ENCODE measurements at regions of chr3 and their contacts with region 1.

Region 1: GRCh38 chr3:98140531-98140930 is 6.7 kb upstream of the OR5H14 start:
- DNase-seq: no peak
- H3K4me3 ChIP-seq: no peak overlapping the region
- H3K4me3 Mint-ChIP-seq: no peak overlapping the region
- H3K27ac ChIP-seq: no peak overlapping the region
- H3K27ac Mint-ChIP-seq: no peak overlapping the region
- H3K4me1 ChIP-seq: no peaks in the 10 kb centered on the region
- H3K4me1 Mint-ChIP-seq: no peaks in the 10 kb centered on the region
- H3K27me3 ChIP-seq: no peaks in the 10 kb centered on the region
- H3K27me3 Mint-ChIP-seq: peaks cover 4 to 8% of the 10 kb centered on the region in 2 donors

Region 2: DNA sequence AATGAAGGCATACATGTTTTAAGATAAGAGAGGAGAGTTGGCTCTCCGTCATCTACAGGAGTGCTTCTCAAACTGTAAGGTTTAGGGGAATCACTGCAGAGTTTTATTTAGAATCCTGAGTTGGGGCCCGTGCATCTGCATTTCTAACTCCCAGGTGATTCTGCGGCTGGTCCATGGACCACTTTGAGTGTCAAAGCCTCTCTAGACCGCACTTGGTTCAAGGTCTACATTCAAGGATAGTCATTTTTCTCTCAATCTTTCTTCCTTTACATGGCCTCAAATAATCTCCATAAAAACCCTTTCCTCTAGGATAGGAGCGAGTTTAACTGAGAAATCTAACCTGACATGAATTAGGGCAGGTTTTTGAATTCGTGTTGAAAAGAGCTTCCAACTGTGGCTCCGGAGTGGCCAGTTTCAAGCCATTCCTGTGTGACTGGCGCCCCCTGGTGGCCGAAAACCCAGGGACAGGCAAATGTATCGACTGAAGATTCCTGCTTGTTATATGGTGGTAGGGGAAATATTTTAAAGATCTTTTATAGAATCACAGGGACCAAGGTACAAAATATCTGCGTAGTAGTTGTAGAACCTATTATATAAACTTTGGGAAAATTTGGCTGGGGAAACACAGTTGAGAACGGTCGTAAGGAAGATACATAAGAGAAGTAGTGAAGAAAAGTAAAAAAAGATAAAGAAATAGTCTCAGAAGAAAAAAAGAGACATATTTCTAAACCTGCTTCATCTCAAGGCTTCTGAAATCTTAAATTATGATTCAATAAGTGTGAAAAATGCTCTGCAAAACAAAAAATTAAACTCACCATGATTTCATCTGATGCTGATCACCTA is 117.3 kb before region 1 on chr3:
- CTCF ChIA-PET with region 1: no interaction called
- POLR2A ChIA-PET with region 1: no interaction called
- intact Hi-C with region 1: no loop called
- DNase-seq: peak; percentile 77 to 84 (median 81)
- H3K4me3 ChIP-seq: no peak overlapping the region
- H3K4me3 Mint-ChIP-seq: no peak overlapping the region
- H3K27ac ChIP-seq: no peak overlapping the region
- H3K27ac Mint-ChIP-seq: peak overlapping the region in 6 of 7 donors; percentile 6 to 72 (median 36)
- H3K4me1 ChIP-seq: peaks cover 1% of the 10 kb centered on the region
- H3K4me1 Mint-ChIP-seq: peaks cover under 1 to 5% (median 5%) of the 10 kb centered on the region in 4 donors
- H3K27me3 ChIP-seq: no peaks in the 10 kb centered on the region
- H3K27me3 Mint-ChIP-seq: no peaks in the 10 kb centered on the region

Region 3: GRCh38 chr3:98115717-98116116 is 24.8 kb before region 1 on chr3:
- CTCF ChIA-PET with region 1: no interaction called
- POLR2A ChIA-PET with region 1: no interaction called
- intact Hi-C with region 1: no loop called
- DNase-seq: no peak
- H3K4me3 ChIP-seq: no peak overlapping the region
- H3K4me3 Mint-ChIP-seq: no peak overlapping the region
- H3K27ac ChIP-seq: no peak overlapping the region
- H3K27ac Mint-ChIP-seq: no peak overlapping the region
- H3K4me1 ChIP-seq: no peaks in the 10 kb centered on the region
- H3K4me1 Mint-ChIP-seq: no peaks in the 10 kb centered on the region
- H3K27me3 ChIP-seq: no peaks in the 10 kb centered on the region
- H3K27me3 Mint-ChIP-seq: peaks cover 8 to 10% of the 10 kb centered on the region in 2 donors

Region 4: GRCh38 chr3:98182196-98182595 is 41.7 kb after region 1 on chr3:
- CTCF ChIA-PET with region 1: no interaction called
- POLR2A ChIA-PET with region 1: no interaction called
- intact Hi-C with region 1: loop called (anchors 2 kb)
- DNase-seq: no peak
- H3K4me3 ChIP-seq: no peak overlapping the region
- H3K4me3 Mint-ChIP-seq: no peak overlapping the region
- H3K27ac ChIP-seq: no peak overlapping the region
- H3K27ac Mint-ChIP-seq: no peak overlapping the region
- H3K4me1 ChIP-seq: no peaks in the 10 kb centered on the region
- H3K4me1 Mint-ChIP-seq: no peaks in the 10 kb centered on the region
- H3K27me3 ChIP-seq: no peaks in the 10 kb centered on the region
- H3K27me3 Mint-ChIP-seq: no peaks in the 10 kb centered on the region